ENCODE measurements at regions of chr1 and their contacts with region 1.

Region 1: GRCh38 chr1:84724128-84724860 is 34.0 kb upstream of the SSX2IP start:
- DNase-seq: peak; percentile 11 to 43 (median 35)
- ATAC-seq: peak; percentile 74
- H3K4me3 ChIP-seq: no peak overlapping the region
- H3K4me3 Mint-ChIP-seq: no peak overlapping the region
- H3K27ac ChIP-seq: no peak overlapping the region
- H3K27ac Mint-ChIP-seq: no peak overlapping the region
- H3K4me1 ChIP-seq: no peaks in the 10 kb centered on the region
- H3K4me1 Mint-ChIP-seq: peaks cover 0 to 2% (median 0%) of the 10 kb centered on the region in 7 donors
- H3K27me3 ChIP-seq: no peaks in the 10 kb centered on the region
- H3K27me3 Mint-ChIP-seq: peaks cover 0 to 22% (median 0%) of the 10 kb centered on the region in 5 donors

Region 2: GRCh38 chr1:84668185-84668584 is 56.1 kb before region 1 on chr1:
- CTCF ChIA-PET with region 1: interaction called, 9 read pairs
- POLR2A ChIA-PET with region 1: no interaction called
- intact Hi-C with region 1: loop called in 1 of 2 experiments (anchors 1 kb)
- DNase-seq: peak in 2 of 9 donors; percentile 11 to 24
- ATAC-seq: peak; percentile 51
- H3K4me3 ChIP-seq: no peak overlapping the region
- H3K4me3 Mint-ChIP-seq: no peak overlapping the region
- H3K27ac ChIP-seq: no peak overlapping the region
- H3K27ac Mint-ChIP-seq: peak overlapping the region in 1 of 9 donors; percentile 34
- H3K4me1 ChIP-seq: peaks cover 0 to 2% of the 10 kb centered on the region in 2 donors
- H3K4me1 Mint-ChIP-seq: peaks cover 0 to 14% (median 10%) of the 10 kb centered on the region in 7 donors
- H3K27me3 ChIP-seq: no peaks in the 10 kb centered on the region
- H3K27me3 Mint-ChIP-seq: no peaks in the 10 kb centered on the region

Region 3: GRCh38 chr1:84834419-84835064 is 110.2 kb after region 1 on chr1:
- CTCF ChIA-PET with region 1: no interaction called
- POLR2A ChIA-PET with region 1: no interaction called
- intact Hi-C with region 1: no loop called
- DNase-seq: no peak
- ATAC-seq: no peak
- H3K4me3 ChIP-seq: no peak overlapping the region
- H3K4me3 Mint-ChIP-seq: no peak overlapping the region
- H3K27ac ChIP-seq: no peak overlapping the region
- H3K27ac Mint-ChIP-seq: peak overlapping the region in 2 of 9 donors; percentile 14 to 31
- H3K4me1 ChIP-seq: no peaks in the 10 kb centered on the region
- H3K4me1 Mint-ChIP-seq: peaks cover 0 to 4% (median 0%) of the 10 kb centered on the region in 7 donors
- H3K27me3 ChIP-seq: no peaks in the 10 kb centered on the region
- H3K27me3 Mint-ChIP-seq: peaks cover 0 to 14% (median 0%) of the 10 kb centered on the region in 5 donors